ENCODE measurements at regions of chr17 and their contacts with region 1.

Region 1: GRCh38 chr17:30808785-30809286 is 15.7 kb downstream of the CRLF3 start:
- DNase-seq: no peak
- ATAC-seq: peak; percentile 94
- H3K4me3 Mint-ChIP-seq: peak overlapping the region; percentile 81
- H3K27ac Mint-ChIP-seq: peak overlapping the region; percentile 95
- H3K4me1 Mint-ChIP-seq: peaks cover 70% of the 10 kb centered on the region
- H3K27me3 Mint-ChIP-seq: no peaks in the 10 kb centered on the region
- CTCF ChIP-seq: no peak

Region 2: DNA sequence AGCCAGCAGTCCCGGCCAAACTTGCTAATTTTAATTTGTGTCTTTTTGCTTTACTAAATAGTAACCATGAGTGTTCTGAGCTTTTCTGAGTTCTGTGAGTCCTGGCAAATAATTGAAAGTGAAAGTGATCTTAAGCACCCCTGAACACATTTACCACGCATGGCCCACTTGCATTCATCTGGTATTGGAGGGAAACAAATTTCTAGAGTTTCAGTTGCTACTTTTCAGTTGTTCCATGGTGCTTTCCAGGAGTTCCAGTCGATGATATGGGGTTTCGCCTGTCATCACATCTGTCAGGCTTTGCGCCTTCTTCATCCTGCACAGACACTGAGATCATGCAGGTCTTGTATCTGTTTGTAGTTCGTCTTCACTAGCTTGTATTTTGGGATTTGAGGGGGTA is 28.5 kb before region 1 on chr17:
- CTCF ChIA-PET with region 1: no interaction called
- POLR2A ChIA-PET with region 1: interaction called, 12 read pairs
- intact Hi-C with region 1: no loop called
- DNase-seq: no peak
- ATAC-seq: no peak
- H3K4me3 Mint-ChIP-seq: no peak overlapping the region
- H3K27ac Mint-ChIP-seq: peak overlapping the region; percentile 25
- H3K4me1 Mint-ChIP-seq: peaks cover 6% of the 10 kb centered on the region
- H3K27me3 Mint-ChIP-seq: no peaks in the 10 kb centered on the region
- CTCF ChIP-seq: no peak

Region 3: DNA sequence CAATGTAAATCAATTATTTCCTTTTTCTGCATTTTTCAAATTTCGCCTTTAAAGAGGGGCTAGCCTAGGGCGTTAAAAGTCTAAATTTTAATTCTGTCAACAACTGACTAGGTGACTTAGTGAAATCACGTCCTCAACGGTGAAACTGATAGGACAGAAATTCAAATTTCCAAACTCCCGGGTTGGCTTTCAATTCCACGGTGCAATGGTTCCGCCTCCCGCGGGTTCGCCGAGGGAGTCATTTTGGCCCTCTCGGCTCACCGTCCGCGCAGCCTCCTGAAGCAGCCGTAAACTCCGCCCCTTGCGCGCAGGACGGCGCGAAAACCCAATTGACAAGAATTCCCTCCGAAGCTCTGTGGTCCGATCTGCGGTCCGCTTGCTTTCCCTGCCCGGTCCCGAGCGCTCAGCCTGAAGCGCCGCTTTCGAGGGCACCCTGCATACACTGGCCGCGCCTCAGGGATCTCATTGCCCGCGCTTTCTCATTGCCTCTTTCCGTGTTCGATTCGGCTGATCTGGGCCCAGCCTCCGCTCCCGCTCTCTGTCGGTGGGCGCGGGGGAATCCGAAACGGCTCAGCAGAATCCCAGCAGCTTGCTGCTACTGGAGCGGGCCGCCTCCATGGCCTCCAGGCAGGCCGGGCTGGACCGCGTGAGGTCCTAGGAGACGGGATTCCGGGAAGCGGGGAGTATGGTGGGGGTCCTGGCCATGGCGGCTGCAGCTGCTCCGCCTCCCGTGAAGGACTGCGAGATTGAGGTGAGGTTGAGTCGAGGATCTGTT is 23.0 kb after region 1 on chr17 and contains the start of gene ATAD5:
- CTCF ChIA-PET with region 1: interaction called, 32 read pairs
- POLR2A ChIA-PET with region 1: interaction called, 152 read pairs
- intact Hi-C with region 1: no loop called
- DNase-seq: peak; percentile 84
- ATAC-seq: peak; percentile 97
- H3K4me3 Mint-ChIP-seq: peak within 1 kb of the TSS; percentile 97
- H3K27ac Mint-ChIP-seq: peak within 1 kb of the TSS; percentile 91
- H3K4me1 Mint-ChIP-seq: peaks cover 23% of the 10 kb centered on the region
- H3K27me3 Mint-ChIP-seq: no peaks in the 10 kb centered on the region
- CTCF ChIP-seq: no peak
- total RNA-seq, gene ATAD5: 6.6 and 8.7 TPM in 2 replicates

Region 4: GRCh38 chr17:30858561-30859245 is 49.9 kb after region 1 on chr17:
- CTCF ChIA-PET with region 1: no interaction called
- POLR2A ChIA-PET with region 1: interaction called, 12 read pairs
- intact Hi-C with region 1: no loop called
- DNase-seq: no peak
- ATAC-seq: no peak
- H3K4me3 Mint-ChIP-seq: no peak overlapping the region
- H3K27ac Mint-ChIP-seq: no peak overlapping the region
- H3K4me1 Mint-ChIP-seq: no peaks in the 10 kb centered on the region
- H3K27me3 Mint-ChIP-seq: no peaks in the 10 kb centered on the region
- CTCF ChIP-seq: no peak

Region 5: GRCh38 chr17:30921544-30922196 is 112.8 kb after region 1 on chr17 and contains the start of gene ADAP2:
- CTCF ChIA-PET with region 1: no interaction called
- POLR2A ChIA-PET with region 1: interaction called, 11 read pairs
- intact Hi-C with region 1: no loop called
- DNase-seq: peak; percentile 53
- ATAC-seq: peak; percentile 73
- H3K4me3 Mint-ChIP-seq: peak within 1 kb of the TSS; percentile 93
- H3K27ac Mint-ChIP-seq: peak within 1 kb of the TSS; percentile 77
- H3K4me1 Mint-ChIP-seq: peaks cover 23% of the 10 kb centered on the region
- H3K27me3 Mint-ChIP-seq: peaks cover 1% of the 10 kb centered on the region
- CTCF ChIP-seq: no peak
- total RNA-seq, gene ADAP2: 16.0 and 16.9 TPM in 2 replicates

Region 6: DNA sequence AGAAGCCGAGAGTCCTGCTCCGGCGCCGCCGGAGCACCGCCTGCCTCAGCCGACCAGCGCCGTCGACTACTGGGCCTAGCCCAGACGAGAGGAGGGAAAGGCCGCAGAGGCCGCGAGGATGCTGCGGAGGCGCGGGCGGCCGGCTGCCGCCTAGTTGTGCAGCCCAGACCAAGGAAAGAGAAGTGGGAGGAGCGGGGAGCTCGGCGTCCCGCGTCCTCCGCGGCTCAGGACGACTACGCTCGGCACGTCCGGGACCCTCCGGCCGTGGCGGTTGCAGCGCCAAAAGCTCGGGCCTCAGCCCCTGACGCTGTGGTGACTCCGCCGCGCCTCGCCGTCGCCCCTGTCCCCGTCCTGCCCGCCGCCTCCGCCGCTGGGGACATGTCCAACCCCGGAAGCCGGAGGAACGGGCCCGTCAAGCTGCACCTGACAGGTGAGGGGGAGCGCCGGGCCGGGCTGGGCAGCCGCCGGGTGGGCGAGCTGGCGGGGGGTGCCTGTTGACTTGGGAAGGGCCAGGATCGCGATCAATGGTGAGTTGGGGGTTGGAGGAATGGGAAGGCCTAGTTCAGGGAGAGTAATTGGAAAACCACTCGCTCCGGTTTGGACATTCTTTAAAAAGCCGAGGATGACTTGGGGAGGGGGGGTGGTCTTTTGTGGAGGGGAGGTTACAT is 199.7 kb after region 1 on chr17:
- CTCF ChIA-PET with region 1: no interaction called
- POLR2A ChIA-PET with region 1: interaction called, 7 read pairs
- intact Hi-C with region 1: loop called (anchors 1 kb)
- DNase-seq: peak; percentile 66
- ATAC-seq: peak; percentile 85
- H3K4me3 Mint-ChIP-seq: peak overlapping the region; percentile 91
- H3K27ac Mint-ChIP-seq: peak overlapping the region; percentile 85
- H3K4me1 Mint-ChIP-seq: peaks cover 24% of the 10 kb centered on the region
- H3K27me3 Mint-ChIP-seq: no peaks in the 10 kb centered on the region
- CTCF ChIP-seq: no peak

Measured in activated B cell treated with CpG ODN at 0.5 μM for 24 hours (primary cell).